Naive thymus-derived CD4-positive, alpha-beta T cell (primary cell): ENCODE measurements at regions of chr4 and their contacts with region 1.

Region 1: DNA sequence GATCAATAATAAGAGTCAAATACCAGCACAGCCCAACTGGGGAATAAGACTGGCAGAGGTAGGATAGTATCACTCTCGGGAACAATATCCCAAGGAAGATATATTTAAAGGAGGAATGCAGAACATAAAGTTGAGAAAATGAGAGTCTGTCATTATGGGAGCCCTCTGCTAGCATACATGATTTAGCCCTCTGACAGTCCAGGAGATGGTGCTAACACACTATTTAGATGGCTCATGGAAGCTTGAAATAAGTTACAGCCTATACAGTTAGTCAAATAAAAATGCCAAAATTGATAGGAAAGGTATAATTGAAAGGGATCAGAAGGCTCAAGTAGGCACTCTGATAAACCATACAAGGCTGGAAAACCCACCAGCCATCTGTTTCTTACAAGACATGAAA is 201.0 kb upstream of the NEIL3 start:
- DNase-seq: no peak
- ATAC-seq: no peak
- H3K4me3 ChIP-seq: no peak overlapping the region
- H3K4me3 Mint-ChIP-seq: no peak overlapping the region
- H3K27ac ChIP-seq: no peak overlapping the region
- H3K27ac Mint-ChIP-seq: no peak overlapping the region
- H3K4me1 ChIP-seq: no peaks in the 10 kb centered on the region
- H3K4me1 Mint-ChIP-seq: no peaks in the 10 kb centered on the region
- H3K27me3 ChIP-seq: no peaks in the 10 kb centered on the region
- H3K27me3 Mint-ChIP-seq: peaks cover 0 to 3% (median 0%) of the 10 kb centered on the region in 5 donors

Region 2: DNA sequence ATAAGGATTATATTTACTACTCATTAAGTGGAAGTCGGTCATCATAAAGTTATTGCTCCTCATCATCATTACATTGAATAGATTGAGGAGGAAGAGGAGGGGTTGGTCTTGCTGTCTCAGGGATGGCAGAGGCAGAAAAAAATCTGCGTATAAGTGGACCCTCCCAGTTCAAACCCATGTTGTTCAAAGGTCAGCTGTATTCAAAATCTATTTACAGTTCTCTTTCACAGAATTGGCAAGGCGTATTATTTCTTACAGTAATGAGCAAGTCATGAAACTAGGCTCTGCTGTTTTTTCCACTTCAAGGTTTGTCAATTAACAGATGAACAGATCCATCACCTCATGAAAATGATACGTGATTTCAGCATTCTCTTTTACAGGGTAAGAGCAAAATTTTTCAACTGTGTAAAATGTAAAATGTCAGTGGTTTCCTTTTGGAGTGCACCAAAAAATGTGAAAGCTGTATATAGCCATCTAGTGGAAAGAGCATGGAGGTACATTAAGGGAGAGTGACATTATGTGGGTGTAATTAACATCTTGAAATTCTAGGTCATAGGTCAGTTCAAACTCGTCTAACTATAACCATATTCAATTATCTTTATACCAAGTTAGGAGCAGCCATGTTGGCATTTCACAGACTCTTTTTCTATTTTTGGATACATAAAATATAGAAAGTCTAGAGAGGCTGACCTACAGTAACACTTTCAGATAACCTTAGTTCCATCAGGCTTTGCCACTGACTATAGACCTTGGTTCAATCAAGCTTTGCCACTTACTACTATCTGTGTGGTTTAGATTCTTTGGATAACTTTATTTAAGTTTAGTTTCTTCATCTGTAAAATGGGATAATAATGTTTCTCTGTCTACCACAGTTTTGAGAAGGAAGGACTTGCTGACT is 231.0 kb after region 1 on chr4:
- CTCF ChIA-PET with region 1: no interaction called
- POLR2A ChIA-PET with region 1: no interaction called
- intact Hi-C with region 1: loop called (anchors 1 to 2 kb)
- DNase-seq: peak in 6 of 9 donors; percentile 5 to 46 (median 32)
- ATAC-seq: peak; percentile 92
- H3K4me3 ChIP-seq: no peak overlapping the region
- H3K4me3 Mint-ChIP-seq: peak overlapping the region in 1 of 10 donors; percentile 56
- H3K27ac ChIP-seq: no peak overlapping the region
- H3K27ac Mint-ChIP-seq: peak overlapping the region in 1 of 9 donors; percentile 64
- H3K4me1 ChIP-seq: no peaks in the 10 kb centered on the region
- H3K4me1 Mint-ChIP-seq: peaks cover 0 to 22% (median 0%) of the 10 kb centered on the region in 7 donors
- H3K27me3 ChIP-seq: no peaks in the 10 kb centered on the region
- H3K27me3 Mint-ChIP-seq: no peaks in the 10 kb centered on the region